ENCODE measurements at regions of chr18 and their contacts with region 1.

Region 1: GRCh38 chr18:24118750-24119577 is 19.9 kb upstream of the CABYR start:
- DNase-seq: peak; percentile 63
- ATAC-seq: peak; percentile 84
- H3K4me3 ChIP-seq: no peak overlapping the region
- H3K27ac ChIP-seq: no peak overlapping the region
- H3K4me1 ChIP-seq: peaks cover under 1% of the 10 kb centered on the region in 2 experiments; a peak in 3 of 4 replicates
- H3K27me3 ChIP-seq: no peaks in the 10 kb centered on the region
- CTCF ChIP-seq: peak; percentile 73 to 80 (median 76)
- POLR2A ChIP-seq: no peak
- RAD21 ChIP-seq: peak; percentile 90

Region 2: DNA sequence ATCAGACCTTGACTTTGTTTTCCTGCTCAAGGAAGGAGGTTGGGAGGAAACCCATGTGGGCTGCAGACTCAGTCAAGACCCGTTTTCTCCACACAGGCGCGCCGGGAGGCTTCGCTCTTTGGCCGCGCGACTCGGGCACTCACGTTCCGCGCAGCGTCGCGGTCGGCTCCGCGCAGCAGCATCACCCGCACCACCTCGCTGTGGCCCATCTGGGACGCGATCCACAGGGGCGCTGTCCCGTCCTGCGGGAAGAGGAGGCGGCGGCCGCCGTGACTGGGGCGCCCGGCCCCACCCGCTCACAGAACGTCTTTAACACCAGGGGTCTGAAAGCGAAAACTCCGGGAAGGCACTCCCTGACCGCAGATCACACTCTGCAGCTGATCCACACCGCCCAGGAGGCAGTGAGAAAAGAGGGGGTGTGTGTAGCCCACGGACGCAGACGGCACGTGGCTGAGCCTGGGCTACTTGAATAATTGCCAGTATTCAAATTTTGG is 499.5 kb before region 1 on chr18:
- CTCF ChIA-PET with region 1: no interaction called
- POLR2A ChIA-PET with region 1: no interaction called
- RAD21 ChIA-PET with region 1: no interaction called
- intact Hi-C with region 1: loop called (anchors 5 kb)
- DNase-seq: no peak
- ATAC-seq: no peak
- H3K4me3 ChIP-seq: no peak overlapping the region
- H3K27ac ChIP-seq: no peak overlapping the region
- H3K4me1 ChIP-seq: no peaks in the 10 kb centered on the region
- H3K27me3 ChIP-seq: no peaks in the 10 kb centered on the region
- CTCF ChIP-seq: no peak
- POLR2A ChIP-seq: no peak
- RAD21 ChIP-seq: no peak

Region 3: DNA sequence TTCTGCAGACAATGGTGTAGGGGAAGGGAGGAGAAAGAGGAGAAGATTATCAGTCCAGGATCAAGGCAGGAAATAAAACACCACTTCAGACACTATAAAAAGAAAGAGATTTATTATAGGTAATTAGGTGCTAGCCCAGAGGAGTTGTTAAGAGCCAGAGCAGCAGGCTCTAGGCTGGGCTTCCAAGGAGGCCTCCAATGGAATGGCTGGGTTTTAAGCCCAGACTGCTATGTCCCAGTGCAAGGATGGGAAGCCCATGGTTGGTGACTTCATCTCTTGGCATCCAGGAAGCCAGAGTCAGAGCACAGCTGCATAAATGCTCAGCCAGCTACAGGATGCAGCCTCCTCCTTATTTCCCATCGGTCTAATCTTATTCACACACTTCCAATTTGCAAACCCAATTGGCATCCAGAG is 334.1 kb before region 1 on chr18:
- CTCF ChIA-PET with region 1: no interaction called
- POLR2A ChIA-PET with region 1: no interaction called
- RAD21 ChIA-PET with region 1: no interaction called
- intact Hi-C with region 1: no loop called
- DNase-seq: no peak
- ATAC-seq: no peak
- H3K4me3 ChIP-seq: no peak overlapping the region
- H3K27ac ChIP-seq: no peak overlapping the region
- H3K4me1 ChIP-seq: peaks cover 0 to 5% of the 10 kb centered on the region in 2 experiments; a peak in 2 of 4 replicates
- H3K27me3 ChIP-seq: no peaks in the 10 kb centered on the region
- CTCF ChIP-seq: no peak
- POLR2A ChIP-seq: no peak
- RAD21 ChIP-seq: no peak

Region 4: DNA sequence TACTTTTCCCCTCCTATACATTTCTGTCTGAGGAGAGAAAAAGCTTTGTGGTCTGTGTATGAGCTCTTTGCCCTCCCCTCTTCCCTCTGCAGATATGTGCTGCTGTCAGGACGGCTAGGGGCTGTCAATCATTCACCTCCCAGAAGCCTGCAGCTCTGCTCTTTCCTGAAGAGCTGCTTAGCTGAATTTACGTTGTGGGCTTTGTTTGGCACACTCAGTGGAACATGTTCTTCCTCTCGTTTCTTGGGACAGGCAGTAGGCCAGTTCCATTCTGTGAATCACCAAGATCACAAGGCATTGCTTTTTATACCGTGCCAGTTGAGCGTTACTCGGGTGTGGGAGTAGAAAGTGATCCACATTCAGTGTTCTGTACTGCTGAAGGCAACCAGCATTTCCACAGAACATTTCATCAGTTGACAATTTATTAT is 293.0 kb before region 1 on chr18:
- CTCF ChIA-PET with region 1: no interaction called
- POLR2A ChIA-PET with region 1: no interaction called
- RAD21 ChIA-PET with region 1: interaction called in 1 of 2 experiments, 3 read pairs
- intact Hi-C with region 1: loop called (anchors 1 kb)
- DNase-seq: no peak
- ATAC-seq: no peak
- H3K4me3 ChIP-seq: no peak overlapping the region
- H3K27ac ChIP-seq: no peak overlapping the region
- H3K4me1 ChIP-seq: peaks cover 2 to 14% of the 10 kb centered on the region in 2 experiments; a peak in 3 of 4 replicates
- H3K27me3 ChIP-seq: no peaks in the 10 kb centered on the region
- CTCF ChIP-seq: no peak
- POLR2A ChIP-seq: no peak
- RAD21 ChIP-seq: no peak

Region 5: DNA sequence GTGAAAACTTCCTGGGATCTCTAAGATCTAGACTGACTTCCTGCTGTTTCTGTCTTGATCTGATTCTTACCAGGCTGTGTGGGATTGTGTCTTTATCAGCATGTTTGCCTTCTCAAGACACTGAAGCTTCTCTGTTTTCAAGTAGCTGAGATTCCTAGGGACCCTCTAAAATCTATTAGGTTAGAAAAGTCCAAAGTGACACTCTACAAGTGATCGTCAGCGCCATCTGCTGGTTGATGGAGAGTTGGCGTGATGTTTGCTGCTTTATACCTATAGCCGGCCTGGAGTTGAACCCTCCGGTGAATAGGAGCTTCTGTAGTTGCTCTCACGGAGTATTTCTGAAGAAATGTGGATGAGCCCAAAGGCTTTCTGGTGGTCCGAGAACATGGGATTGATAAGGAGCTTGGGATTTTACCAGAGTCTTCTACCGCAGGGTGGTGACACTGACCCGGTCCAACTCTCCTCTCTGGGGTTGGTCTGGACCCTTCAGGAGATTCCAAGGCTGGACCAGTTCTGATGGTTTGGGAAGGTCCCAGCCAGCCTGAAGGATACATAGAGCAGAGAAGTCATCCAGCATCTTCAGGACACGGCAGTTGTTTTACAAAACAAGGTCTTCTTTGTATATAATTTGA is 200.4 kb before region 1 on chr18:
- CTCF ChIA-PET with region 1: interaction called, 3 read pairs
- POLR2A ChIA-PET with region 1: no interaction called
- RAD21 ChIA-PET with region 1: interaction called in 1 of 2 experiments, 3 read pairs
- intact Hi-C with region 1: loop called (anchors 1 kb)
- DNase-seq: peak; percentile 42
- ATAC-seq: peak; percentile 94
- H3K4me3 ChIP-seq: no peak overlapping the region
- H3K27ac ChIP-seq: no peak overlapping the region
- H3K4me1 ChIP-seq: no peaks in the 10 kb centered on the region
- H3K27me3 ChIP-seq: no peaks in the 10 kb centered on the region
- CTCF ChIP-seq: peak; percentile 72 to 90 (median 86); a peak in 5 of 6 replicates
- POLR2A ChIP-seq: no peak
- RAD21 ChIP-seq: peak; percentile 84